ENCODE measurements at regions of chr6 and their contacts with region 1.

Region 1: GRCh38 chr6:90393232-90393884 is 96.7 kb upstream of the BACH2 start:
- DNase-seq: peak; percentile 45
- H3K4me3 ChIP-seq: no peak overlapping the region
- H3K27ac ChIP-seq: no peak overlapping the region
- H3K4me1 ChIP-seq: no peaks in the 10 kb centered on the region
- H3K27me3 ChIP-seq: no peaks in the 10 kb centered on the region
- CTCF ChIP-seq: peak; percentile 64

Region 2: DNA sequence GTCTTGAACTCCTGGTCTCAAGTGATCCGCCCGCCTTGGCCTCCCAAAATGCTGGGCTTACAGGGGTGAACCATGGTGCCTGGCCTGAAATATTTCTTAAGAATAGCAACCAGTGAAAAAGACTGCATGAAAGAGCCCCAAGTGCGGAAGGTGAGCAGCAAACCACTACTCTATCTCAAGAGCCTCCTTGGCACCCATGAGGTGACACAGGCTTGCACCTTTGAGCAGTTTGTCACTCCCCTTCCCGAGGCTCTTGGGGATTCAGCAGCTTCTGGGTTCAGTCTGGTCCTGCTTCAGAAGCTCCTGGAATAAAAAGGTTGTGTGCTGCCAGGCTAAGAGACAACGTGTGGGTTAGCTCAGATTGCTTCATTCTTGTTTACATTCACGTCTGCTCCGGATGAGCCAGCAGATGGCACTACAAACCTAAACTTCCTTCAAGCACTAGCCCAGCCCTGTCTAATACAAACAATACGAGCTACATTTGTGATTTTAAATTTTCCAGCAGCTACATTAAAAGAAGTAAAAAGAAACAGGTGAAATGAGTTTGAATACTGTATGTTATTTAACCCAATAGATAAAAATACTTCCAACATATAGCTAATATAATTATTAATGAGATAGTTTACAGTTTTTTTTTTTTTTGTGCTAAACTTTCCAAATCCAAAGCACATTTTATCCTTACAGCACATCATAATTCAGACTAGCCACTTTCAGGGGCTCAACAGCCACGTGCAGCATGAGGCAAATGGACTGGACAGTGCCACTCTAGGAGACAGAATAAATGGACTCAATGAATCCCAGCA is 452.9 kb before region 1 on chr6:
- intact Hi-C with region 1: loop called (anchors 2 kb)
- DNase-seq: peak; percentile 70
- H3K4me3 ChIP-seq: no peak overlapping the region
- H3K27ac ChIP-seq: no peak overlapping the region
- H3K4me1 ChIP-seq: no peaks in the 10 kb centered on the region
- H3K27me3 ChIP-seq: no peaks in the 10 kb centered on the region
- CTCF ChIP-seq: peak; percentile 61

Region 3: GRCh38 chr6:89970609-89971337 is 422.6 kb before region 1 on chr6:
- intact Hi-C with region 1: loop called (anchors 5 kb)
- DNase-seq: no peak
- H3K4me3 ChIP-seq: no peak overlapping the region
- H3K27ac ChIP-seq: no peak overlapping the region
- H3K4me1 ChIP-seq: no peaks in the 10 kb centered on the region
- H3K27me3 ChIP-seq: no peaks in the 10 kb centered on the region
- CTCF ChIP-seq: peak; percentile 49

Region 4: DNA sequence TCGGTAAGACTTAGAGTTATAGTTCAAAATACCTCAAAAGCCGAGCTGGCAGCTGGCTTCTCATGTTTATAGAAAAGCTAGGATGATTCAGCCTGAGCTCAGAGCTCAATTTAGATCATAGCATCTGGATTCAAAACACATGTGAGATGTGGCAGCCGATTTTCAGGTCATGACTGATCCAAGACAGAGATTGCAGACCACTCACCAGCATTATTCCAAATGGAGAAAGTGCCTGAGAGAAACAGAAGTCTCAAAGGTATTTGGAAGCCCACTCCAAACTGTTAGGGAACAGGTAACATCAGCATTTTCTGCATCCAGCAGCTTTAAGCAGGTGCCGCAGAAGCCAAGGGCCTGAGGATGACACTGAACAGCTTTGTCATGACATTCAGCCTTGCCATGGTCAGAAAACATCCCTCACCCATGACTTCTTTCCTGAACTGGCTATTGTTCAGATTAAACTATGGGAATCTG is 199.0 kb before region 1 on chr6:
- intact Hi-C with region 1: no loop called
- DNase-seq: no peak
- H3K4me3 ChIP-seq: no peak overlapping the region
- H3K27ac ChIP-seq: no peak overlapping the region
- H3K4me1 ChIP-seq: no peaks in the 10 kb centered on the region
- H3K27me3 ChIP-seq: no peaks in the 10 kb centered on the region
- CTCF ChIP-seq: no peak

Region 5: DNA sequence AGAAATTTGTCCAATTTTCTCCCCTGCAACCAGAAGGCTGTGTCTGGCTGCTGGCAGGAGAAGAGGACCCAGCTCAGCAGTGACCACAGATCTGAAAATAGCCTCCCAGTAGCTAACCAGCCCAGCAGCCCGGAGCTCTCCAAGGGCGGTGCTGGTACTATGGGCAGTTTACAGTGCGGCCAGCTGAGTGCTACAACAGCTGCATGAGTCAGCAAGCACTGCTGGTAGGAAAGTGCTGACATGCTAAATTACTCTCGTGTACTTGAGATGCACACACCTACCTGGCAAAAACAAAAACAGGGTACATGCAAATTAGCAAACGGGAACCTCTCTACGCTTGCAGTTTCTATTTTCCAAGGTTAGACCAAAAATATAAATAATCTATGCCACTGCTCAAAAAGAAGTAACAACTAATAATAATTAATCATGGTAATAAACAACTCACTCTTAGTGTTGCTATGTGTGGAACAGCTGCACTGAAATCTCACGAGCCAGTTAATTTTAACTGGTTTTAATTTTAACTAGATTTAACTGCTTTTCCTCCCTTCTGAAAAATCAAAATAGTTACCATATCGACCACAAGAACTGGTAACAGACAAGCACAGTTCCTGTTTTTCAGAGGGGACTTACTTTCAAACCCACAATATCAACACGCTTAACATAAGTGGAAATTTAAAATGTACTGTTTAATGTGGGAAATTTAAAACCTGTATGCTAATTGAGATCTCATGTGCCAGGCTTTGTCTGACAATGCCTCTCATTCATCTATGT is 107.6 kb before region 1 on chr6:
- intact Hi-C with region 1: loop called (anchors 5 kb)
- DNase-seq: peak; percentile 58
- H3K4me3 ChIP-seq: no peak overlapping the region
- H3K27ac ChIP-seq: peak overlapping the region; percentile 10
- H3K4me1 ChIP-seq: no peaks in the 10 kb centered on the region
- H3K27me3 ChIP-seq: no peaks in the 10 kb centered on the region
- CTCF ChIP-seq: no peak

Region 6: DNA sequence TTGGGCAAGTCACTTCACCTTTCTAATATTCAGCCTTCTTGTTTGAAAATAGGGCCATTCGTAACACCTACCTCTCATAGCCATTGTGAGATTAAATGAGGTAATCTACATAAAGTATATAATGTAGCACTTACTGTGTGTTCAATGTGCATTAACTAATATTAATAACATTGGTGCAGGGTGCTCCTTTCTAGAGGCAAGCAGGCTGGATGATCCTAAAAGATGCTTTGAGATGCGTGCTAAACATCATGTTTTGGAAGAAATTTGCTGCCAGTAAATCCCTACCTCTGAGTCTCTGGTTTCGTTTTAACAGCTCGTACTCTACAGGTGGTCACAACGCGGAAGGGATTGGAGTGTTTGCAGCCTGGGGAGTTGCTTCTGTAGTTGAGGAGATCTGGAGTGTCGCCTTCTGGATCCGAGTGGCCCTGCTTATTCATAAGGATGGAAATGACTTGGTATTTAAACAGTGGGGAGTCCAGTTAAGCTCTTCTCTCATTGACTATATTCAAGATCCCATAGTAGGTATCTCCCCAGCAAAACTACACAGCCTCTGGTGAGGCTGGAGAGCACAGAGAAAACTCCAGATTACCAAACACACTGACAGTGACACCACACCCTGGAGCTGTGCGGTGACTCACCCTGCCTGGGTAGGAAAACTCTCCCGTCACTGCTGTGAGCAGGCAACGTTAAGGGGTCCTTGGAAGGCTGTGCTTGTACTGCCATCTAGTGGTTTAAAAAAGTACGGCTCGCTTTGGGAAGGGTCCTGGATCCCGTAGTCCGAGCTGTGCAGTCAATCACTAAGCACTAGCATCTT is 85.6 kb after region 1 on chr6:
- intact Hi-C with region 1: loop called (anchors 5 kb)
- DNase-seq: peak; percentile 83
- H3K4me3 ChIP-seq: no peak overlapping the region
- H3K27ac ChIP-seq: no peak overlapping the region
- H3K4me1 ChIP-seq: no peaks in the 10 kb centered on the region
- H3K27me3 ChIP-seq: no peaks in the 10 kb centered on the region
- CTCF ChIP-seq: peak; percentile 89

Region 7: DNA sequence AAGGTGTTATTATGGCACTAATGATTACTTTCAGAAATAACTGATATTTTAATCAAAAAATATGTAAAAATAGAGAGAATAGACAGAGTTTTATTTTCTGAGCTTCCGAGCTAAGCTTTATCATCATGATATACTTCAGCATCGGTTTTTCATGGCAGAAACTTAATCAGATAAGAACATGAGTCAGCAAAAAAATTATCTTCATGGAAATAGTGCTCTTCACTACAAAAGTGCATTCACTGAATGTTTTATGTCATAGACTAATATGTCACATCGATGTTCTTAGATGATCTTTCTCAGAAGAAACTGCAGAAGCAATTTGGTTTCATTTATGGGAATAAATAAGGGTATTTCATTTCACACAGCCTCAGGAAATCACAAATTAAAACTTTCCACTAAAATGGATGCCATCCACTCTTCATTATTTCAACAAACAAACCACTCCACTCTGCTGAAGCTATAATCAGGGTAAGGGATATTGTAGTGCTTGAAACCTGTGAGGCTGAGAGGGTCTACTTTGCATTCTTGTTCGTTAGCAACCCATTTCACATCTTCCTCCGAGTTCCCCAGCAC is 203.7 kb after region 1 on chr6:
- intact Hi-C with region 1: no loop called
- DNase-seq: no peak
- H3K4me3 ChIP-seq: no peak overlapping the region
- H3K27ac ChIP-seq: no peak overlapping the region
- H3K4me1 ChIP-seq: no peaks in the 10 kb centered on the region
- H3K27me3 ChIP-seq: no peaks in the 10 kb centered on the region
- CTCF ChIP-seq: no peak

Measured in colonic mucosa (tissue), 4 donors.